ENCODE measurements at regions of chr12 and their contacts with region 1.

Region 1: DNA sequence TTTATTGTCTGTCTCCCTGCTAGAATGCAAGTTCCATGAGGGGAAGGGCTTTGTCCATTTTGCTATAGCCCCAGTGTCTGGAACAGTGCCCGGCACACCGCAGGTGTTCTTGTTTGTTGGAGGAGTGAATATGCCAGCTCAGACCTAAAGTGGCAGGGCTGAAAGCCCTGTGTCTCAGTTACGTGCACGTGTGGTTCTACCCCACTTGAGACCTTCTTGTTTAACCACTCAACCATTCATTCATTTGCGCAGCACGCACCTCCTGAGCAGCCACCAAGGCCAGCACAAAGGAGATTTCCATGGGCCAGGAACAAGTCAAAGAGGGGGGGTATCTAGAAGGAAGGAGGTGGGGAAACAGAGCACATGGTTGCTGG is 338.0 kb upstream of the FKBP4 start:
- DNase-seq: no peak
- ATAC-seq: no peak
- H3K4me3 ChIP-seq: no peak overlapping the region
- H3K27ac ChIP-seq: peak overlapping the region in 9 of 10 donors; percentile 63 to 88 (median 78)
- H3K4me1 ChIP-seq: peaks cover 3 to 62% (median 34%) of the 10 kb centered on the region in 9 donors
- H3K27me3 ChIP-seq: no peaks in the 10 kb centered on the region
- CTCF ChIP-seq: no peak

Region 2: DNA sequence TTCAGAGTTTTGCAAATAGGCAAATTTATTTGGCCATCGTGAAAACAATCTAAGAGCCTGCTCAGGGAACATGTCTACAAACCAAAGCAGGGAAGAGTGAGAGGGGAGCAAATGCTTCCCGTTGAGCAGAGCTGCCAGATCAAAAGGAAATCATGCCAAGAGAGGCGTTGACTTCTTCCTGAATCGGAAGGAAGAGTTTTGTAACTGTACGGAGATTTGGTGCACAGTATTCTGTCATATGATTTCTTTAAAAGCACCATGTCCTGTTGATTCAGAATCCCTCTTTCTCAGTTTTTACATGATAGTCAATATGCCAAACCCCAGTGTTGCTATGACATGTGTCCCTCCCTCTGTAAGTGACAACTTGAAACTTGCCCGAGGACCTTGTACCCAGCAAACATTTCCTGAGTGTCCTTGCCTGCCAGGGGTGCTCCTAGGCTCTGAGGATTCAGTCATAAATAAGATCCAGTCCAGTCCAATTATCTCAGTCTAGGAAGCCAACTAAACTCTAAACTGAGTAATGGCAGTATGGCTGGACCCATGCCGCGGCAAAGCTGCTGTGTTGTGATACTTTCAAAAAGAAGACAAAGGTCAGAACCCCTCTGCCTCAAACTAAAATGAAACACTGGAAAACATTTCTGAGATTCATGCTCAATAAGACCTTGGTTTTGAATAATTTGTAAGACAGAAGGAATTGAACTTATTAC is 37.8 kb after region 1 on chr12:
- intact Hi-C with region 1: loop called in 4 of 10 experiments (anchors 2 to 5 kb)
- DNase-seq: peak in 1 of 2 donors; percentile 77
- ATAC-seq: peak; percentile 41 to 81 (median 58)
- H3K4me3 ChIP-seq: no peak overlapping the region
- H3K27ac ChIP-seq: peak overlapping the region; percentile 15 to 87 (median 72)
- H3K4me1 ChIP-seq: peaks cover 22 to 92% (median 61%) of the 10 kb centered on the region in 9 donors
- H3K27me3 ChIP-seq: no peaks in the 10 kb centered on the region
- CTCF ChIP-seq: no peak

Region 3: DNA sequence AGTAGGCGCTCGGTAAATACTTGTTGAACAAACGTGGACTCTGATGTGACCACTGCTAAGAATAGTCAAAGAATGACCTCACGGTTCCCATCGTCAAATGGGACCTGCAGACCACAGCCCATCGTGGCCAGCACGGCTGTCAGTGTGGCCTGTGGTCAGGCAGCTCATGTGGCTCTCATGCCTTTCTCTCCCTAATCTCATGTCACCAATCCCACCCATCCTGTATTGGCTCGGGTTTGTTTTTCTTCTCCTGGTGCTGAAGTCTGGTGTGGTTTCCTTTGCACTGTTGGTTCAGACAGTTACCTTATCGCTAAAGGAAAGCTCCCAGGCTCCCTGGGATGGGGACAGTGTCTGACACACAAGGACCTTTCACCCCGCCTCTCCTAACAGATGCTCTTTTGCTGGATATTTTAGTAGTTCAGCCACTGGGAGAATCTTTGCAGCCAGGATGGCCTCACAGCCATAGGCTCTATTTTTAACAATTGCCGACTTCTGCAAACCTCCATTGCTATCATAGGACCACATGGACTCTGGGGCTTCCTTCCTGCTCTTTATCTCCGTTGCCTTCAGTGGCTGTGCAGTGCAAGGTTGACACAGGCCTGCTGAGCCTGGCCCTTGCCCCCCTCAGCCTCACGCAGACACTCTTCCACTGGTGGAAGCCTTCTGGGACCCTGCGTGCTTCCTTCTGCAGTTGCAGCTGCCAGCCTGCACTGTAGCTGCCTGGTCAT is 44.8 kb after region 1 on chr12:
- intact Hi-C with region 1: loop called in 1 of 10 experiments (anchors 1 kb)
- DNase-seq: peak; percentile 32 to 69
- ATAC-seq: peak; percentile 60 to 88 (median 76)
- H3K4me3 ChIP-seq: no peak overlapping the region
- H3K27ac ChIP-seq: peak overlapping the region; percentile 19 to 94 (median 78)
- H3K4me1 ChIP-seq: peaks cover 14 to 67% (median 47%) of the 10 kb centered on the region in 9 donors
- H3K27me3 ChIP-seq: no peaks in the 10 kb centered on the region
- CTCF ChIP-seq: peak in 1 of 9 donors; percentile 6

Region 4: GRCh38 chr12:2561367-2561766 is 104.6 kb after region 1 on chr12:
- intact Hi-C with region 1: loop called in 1 of 10 experiments (anchors 5 kb)
- DNase-seq: no peak
- ATAC-seq: peak in 7 of 8 donors; percentile 5 to 65 (median 20)
- H3K4me3 ChIP-seq: no peak overlapping the region
- H3K27ac ChIP-seq: peak overlapping the region in 6 of 10 donors; percentile 2 to 64 (median 40)
- H3K4me1 ChIP-seq: peaks cover 2 to 36% (median 24%) of the 10 kb centered on the region in 9 donors
- H3K27me3 ChIP-seq: no peaks in the 10 kb centered on the region
- CTCF ChIP-seq: no peak

Measured in heart right ventricle (tissue), 16 donors.